Mucosa of descending colon (tissue), 3 donors: ENCODE measurements at regions of chr12 and their contacts with region 1.

Region 1: DNA sequence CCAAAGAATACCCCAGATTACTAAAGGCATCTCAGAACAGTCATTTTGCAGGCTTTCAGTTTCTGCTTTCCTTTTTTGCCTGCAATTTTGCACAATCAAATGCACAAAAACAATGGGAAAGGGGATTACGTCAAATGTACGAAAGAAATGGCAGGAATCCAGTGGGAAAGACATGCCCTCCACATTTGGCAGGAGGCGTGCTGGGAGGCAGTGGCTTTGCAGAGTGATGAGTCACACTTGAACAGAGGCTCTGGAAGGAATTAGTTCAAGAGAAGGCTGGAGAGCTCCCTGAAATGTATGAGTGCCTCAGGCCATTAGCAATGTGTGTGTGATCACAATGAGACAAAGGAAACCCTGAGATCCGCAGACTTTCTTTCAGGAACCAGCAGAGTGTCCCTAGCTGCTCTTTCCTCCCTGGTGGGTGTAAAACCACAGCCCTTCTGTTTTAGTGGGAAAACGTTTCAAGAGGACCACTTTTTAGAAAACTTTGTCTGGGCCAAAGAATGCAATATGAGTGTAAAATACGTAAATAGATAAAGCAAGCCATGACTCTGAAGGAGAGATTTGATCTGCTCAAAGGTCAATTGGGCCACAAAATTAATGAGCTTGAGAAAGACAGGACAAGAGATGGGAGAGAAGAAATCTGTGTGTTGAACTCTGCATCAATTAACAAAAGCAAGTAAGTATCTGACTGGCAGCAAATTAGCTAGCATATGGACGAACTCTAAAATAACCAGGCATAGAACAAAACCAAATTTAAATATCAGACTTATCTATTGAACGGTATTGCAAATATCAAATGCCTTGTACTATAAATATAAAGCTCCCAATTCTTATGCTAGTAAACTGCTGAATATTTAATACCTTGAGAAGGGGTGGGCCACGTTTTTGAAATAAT is 155.4 kb upstream of the PDE3A start:
- DNase-seq: peak; percentile 50 to 66 (median 55)
- ATAC-seq: peak; percentile 91
- H3K4me3 ChIP-seq: no peak overlapping the region
- H3K4me1 ChIP-seq: peaks cover 18% of the 10 kb centered on the region
- CTCF ChIP-seq: no peak

Region 2: GRCh38 chr12:19744734-19745218 is 468.1 kb before region 1 on chr12:
- intact Hi-C with region 1: loop called in 1 of 2 experiments (anchors 10 kb)
- DNase-seq: no peak
- ATAC-seq: no peak
- H3K4me3 ChIP-seq: no peak overlapping the region
- H3K4me1 ChIP-seq: peaks cover 3% of the 10 kb centered on the region
- CTCF ChIP-seq: no peak